Activated B cell treated with CpG ODN at 0.5 μM for 24 hours (primary cell): ENCODE measurements at regions of chr9 and their contacts with region 1.

Region 1: DNA sequence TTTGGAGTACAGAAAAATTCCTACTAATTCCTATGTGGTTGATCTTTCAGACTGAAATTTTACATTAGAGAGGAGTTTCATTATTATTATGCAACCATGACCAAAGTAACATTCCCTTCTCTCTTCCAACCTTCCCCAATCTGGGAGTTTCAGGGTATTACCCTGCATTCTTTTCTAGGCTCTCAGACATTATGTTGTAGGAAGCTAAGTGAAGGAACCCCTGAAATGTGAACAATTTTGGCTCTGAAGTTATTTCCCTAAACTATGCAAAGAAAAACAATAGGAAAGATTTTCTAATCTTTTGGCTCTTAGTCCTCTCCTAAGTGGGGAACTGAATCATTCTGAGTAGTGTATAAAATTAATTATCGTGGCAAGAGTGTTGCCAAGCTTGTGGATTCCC is 63.3 kb upstream of the ZFAND5 start:
- DNase-seq: no peak
- ATAC-seq: no peak
- H3K4me3 Mint-ChIP-seq: no peak overlapping the region
- H3K27ac Mint-ChIP-seq: no peak overlapping the region
- H3K4me1 Mint-ChIP-seq: peaks cover 3% of the 10 kb centered on the region
- H3K27me3 Mint-ChIP-seq: no peaks in the 10 kb centered on the region
- CTCF ChIP-seq: no peak

Region 2: GRCh38 chr9:72384710-72385485 is 43.4 kb before region 1 on chr9:
- CTCF ChIA-PET with region 1: no interaction called
- POLR2A ChIA-PET with region 1: no interaction called
- intact Hi-C with region 1: loop called (anchors 5 kb)
- DNase-seq: no peak
- ATAC-seq: no peak
- H3K4me3 Mint-ChIP-seq: no peak overlapping the region
- H3K27ac Mint-ChIP-seq: no peak overlapping the region
- H3K4me1 Mint-ChIP-seq: peaks cover 3% of the 10 kb centered on the region
- H3K27me3 Mint-ChIP-seq: peaks cover 3% of the 10 kb centered on the region
- CTCF ChIP-seq: no peak